AG04449 (cell line): ENCODE measurements at regions of chr22 and their contacts with region 1.

Region 1: GRCh38 chr22:28600546-28601143 is 79.0 kb downstream of the TTC28 start:
- DNase-seq: peak; percentile 28
- H3K4me3 ChIP-seq: no peak overlapping the region
- CTCF ChIP-seq: no peak

Region 2: DNA sequence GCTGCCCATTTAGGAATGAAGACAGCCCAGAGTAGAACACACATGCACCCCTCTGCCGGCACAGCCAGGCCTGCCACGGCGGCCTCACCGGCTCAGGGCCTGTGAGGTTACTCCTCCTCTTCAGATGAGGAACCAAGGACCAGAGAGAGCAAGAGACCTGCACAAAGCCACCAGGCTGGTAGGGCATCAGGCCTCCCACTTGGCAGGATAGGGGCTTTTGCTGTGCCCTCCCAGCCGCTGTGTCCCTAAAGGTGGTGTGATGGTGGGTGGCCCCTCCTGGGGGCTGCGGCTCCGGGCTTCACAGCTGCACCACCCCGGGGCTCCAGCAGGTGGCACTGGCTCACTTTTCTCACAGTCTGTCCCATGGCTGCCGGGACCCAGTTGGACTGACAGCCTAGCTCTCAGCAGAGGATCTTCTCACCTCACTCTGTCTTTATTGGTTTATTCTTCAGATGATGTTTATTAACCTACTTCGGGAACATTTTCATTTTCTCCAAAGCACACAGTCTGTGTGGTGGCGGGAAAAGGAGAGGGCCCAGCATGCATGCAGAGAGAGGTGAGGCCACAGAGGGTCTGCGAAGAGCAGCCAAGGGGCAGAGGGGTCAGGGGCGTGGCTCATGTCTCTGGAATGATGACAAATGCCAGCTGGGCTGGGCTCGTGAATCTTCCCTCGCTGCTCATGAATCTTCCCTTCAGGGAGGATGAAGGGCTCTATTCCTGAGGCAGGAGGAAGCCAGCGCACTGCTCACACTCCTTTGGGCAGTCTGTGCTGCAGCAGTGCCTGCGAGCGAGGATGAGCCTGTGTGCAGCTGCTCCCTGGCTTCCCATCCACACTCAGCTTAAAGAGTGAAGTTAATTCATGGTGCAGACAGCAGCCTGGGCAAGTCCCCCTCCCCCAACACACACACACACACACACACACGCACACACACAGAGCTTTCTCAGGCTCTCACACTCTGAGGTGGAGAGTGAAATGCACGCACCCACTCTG is 580.5 kb before region 1 on chr22:
- CTCF ChIA-PET with region 1: interaction called, 77 read pairs
- POLR2A ChIA-PET with region 1: no interaction called
- DNase-seq: no peak
- H3K4me3 ChIP-seq: peak overlapping the region; percentile 43
- CTCF ChIP-seq: peak; percentile 92

Region 3: GRCh38 chr22:28589102-28589750 is 11.4 kb before region 1 on chr22:
- CTCF ChIA-PET with region 1: interaction called, 10 read pairs
- POLR2A ChIA-PET with region 1: no interaction called
- DNase-seq: no peak
- H3K4me3 ChIP-seq: no peak overlapping the region
- CTCF ChIP-seq: no peak

Region 4: GRCh38 chr22:28783786-28784671 is 183.4 kb after region 1 on chr22:
- CTCF ChIA-PET with region 1: interaction called, 15 read pairs
- POLR2A ChIA-PET with region 1: no interaction called
- DNase-seq: no peak
- H3K4me3 ChIP-seq: no peak overlapping the region
- CTCF ChIP-seq: no peak

Region 5: GRCh38 chr22:28810821-28811491 is 210.3 kb after region 1 on chr22:
- CTCF ChIA-PET with region 1: interaction called, 20 read pairs
- POLR2A ChIA-PET with region 1: no interaction called
- DNase-seq: no peak
- H3K4me3 ChIP-seq: no peak overlapping the region
- CTCF ChIP-seq: no peak

Region 6: DNA sequence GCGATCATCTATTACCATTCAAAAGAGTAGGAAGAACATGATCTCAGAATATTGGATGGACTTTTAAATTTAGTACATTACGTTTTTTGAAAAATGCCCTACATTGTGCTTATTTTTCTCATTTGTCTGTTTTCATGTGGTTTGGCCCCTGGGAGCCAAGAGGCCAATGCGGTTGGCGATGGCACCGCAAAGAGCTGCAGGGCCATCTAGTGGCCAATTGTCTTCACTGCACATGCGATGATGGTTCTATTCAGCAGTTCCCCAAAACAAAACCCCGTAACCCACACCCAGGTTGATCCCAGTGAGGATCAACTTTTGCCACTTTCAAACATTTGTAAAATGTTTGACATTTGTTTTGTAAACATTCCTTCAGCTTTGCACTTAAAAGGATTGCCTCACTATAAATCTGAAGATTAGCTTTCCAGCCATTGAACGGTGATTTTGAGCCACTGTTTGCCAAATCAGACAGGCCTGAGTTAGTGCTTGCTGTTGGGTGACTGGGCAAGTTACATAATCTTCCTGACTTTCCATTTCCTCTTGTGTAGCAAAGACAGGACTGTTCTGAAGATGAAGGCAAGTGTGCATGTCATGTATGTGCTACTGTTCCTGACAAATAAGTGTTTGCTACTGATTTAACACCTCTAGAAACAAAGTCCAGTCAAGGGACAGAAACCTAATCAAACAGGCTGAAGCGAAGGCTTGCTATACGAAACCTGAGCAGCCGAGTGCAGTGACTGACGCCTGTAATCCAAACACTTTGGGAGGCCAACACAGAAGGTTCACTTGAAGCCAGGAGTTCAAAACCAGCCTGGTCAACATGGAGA is 228.9 kb after region 1 on chr22:
- CTCF ChIA-PET with region 1: interaction called, 211 read pairs
- POLR2A ChIA-PET with region 1: no interaction called
- DNase-seq: peak; percentile 7
- H3K4me3 ChIP-seq: no peak overlapping the region
- CTCF ChIP-seq: peak; percentile 89

Region 7: DNA sequence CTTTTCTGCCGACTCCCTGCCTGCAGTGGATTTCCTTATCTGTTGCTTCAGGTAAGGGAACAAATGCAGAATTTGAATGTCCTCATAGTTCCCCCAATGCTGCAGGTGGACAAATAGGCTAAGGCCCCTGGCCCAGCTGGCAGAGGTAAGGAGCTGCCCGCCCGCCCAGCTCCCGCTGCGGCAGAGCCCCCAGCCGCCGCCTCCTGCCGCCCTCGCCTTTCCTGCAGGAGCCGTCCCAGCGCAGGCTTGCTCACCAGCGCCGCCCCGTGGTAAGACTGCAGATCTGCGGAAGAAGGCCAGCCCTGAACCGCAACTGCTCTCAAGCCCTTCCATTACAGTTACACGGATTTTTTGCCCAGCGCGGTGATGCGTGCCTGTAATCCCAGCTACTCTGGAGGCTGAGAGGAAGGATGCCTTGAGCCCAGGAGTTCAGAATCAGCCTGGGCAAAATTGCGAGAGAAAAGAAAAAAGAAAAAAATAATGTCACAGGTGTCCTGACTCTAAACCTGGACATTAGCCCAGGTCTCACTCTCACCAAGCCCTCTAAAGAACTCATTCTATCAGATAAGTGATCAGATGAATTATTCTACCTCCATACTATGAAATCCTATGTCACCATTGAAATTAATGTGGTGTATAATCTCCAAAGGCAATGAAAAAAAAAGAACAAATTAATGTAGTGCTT is 553.9 kb after region 1 on chr22:
- CTCF ChIA-PET with region 1: interaction called, 14 read pairs
- POLR2A ChIA-PET with region 1: no interaction called
- DNase-seq: no peak
- H3K4me3 ChIP-seq: no peak overlapping the region
- CTCF ChIP-seq: peak; percentile 98